Activated T-helper 1 cell treated with anti-CD3 and anti-CD28 coated beads, Interleukin-12 subunit alpha, Interleukin-12 subunit beta, Interleukin-2, Interleukin-4 antibody, amounts not matched to agents 30 ng/mL and 10 ng/mL and 1 ng/mL, durations not matched to agents 14 hours and 24 hours and 36 hours (primary cell): ENCODE measurements at regions of chr3 and their contacts with region 1.

Region 1: GRCh38 chr3:156787926-156788663 is 38.1 kb upstream of the LEKR1 start:
- DNase-seq: no peak
- H3K4me3 Mint-ChIP-seq: no peak overlapping the region
- H3K27ac Mint-ChIP-seq: peak overlapping the region; percentile 10
- H3K4me1 Mint-ChIP-seq: peaks cover 48% of the 10 kb centered on the region
- H3K27me3 Mint-ChIP-seq: no peaks in the 10 kb centered on the region

Region 2: GRCh38 chr3:156723182-156723619 is 64.9 kb before region 1 on chr3:
- intact Hi-C with region 1: loop called (anchors 5 kb)
- DNase-seq: no peak
- H3K4me3 Mint-ChIP-seq: no peak overlapping the region
- H3K27ac Mint-ChIP-seq: peak overlapping the region; percentile 45
- H3K4me1 Mint-ChIP-seq: peaks cover 27% of the 10 kb centered on the region
- H3K27me3 Mint-ChIP-seq: no peaks in the 10 kb centered on the region

Region 3: DNA sequence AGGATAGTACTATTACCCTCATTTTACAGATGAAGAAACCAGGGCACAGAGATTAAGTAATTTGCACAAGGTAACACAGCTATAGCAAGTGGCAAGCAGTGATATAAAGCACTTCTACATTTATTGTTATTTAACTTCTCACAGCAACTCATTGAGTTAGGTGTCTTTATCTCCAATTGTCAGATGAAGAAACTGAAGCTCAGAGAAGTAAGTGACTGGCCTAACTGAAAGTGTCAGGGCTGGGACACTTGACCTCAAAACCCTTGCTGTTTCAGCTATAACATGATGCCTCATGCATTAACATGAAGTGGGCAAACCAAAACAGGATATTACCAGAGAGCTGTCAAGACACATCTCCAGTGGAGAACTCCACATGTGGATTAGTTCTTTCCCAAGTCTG is 27.8 kb before region 1 on chr3:
- intact Hi-C with region 1: no loop called
- DNase-seq: no peak
- H3K4me3 Mint-ChIP-seq: no peak overlapping the region
- H3K27ac Mint-ChIP-seq: no peak overlapping the region
- H3K4me1 Mint-ChIP-seq: peaks cover 9% of the 10 kb centered on the region
- H3K27me3 Mint-ChIP-seq: peaks cover 5% of the 10 kb centered on the region

Region 4: DNA sequence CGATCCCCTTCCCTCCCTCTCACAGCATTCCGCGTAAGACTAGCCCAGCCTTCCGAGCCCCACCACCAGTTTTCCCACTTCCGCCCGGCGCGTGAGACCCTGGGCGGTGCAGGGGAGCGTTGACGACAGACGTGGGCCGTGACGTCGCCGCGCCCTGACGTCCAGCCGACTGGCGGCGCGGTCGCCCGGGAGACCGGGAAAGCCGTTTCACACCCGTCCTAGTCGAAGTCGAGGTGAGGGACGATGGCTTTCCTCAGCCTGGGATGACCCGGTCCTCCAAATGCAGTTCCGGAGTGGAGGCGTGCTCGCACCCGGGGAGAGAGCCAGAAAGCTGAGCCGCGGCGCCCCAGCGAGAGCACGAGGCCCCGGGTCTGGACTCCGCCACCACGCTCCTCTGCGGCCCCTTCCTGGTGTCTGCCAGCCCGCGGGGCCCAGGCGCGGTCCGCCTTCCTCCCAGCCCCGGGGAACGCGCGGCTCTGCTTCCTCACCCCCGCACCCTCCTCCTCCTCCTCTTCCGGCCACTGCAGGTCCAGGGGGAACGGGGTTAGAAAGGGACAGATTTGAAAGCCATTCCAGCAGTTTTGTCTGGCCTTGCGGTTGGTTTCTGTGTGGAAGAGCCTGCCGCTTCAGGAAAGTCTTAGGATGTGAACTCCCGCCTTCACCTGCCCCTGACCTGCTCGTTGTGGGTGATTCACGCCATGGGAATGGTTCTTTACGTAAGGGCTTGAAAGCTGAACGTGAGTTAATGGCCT is 38.2 kb after region 1 on chr3 and contains the start of gene LEKR1:
- intact Hi-C with region 1: loop called (anchors 2 kb)
- DNase-seq: peak; percentile 64
- H3K4me3 Mint-ChIP-seq: peak within 1 kb of the TSS; percentile 87
- H3K27ac Mint-ChIP-seq: peak within 1 kb of the TSS; percentile 92
- H3K4me1 Mint-ChIP-seq: peaks cover 36% of the 10 kb centered on the region
- H3K27me3 Mint-ChIP-seq: peaks cover 2% of the 10 kb centered on the region
- total RNA-seq, gene LEKR1: 0.57 TPM in 1 of 2 replicates, not detected in the other